Prostate gland (tissue), 2 donors: ENCODE measurements at regions of chr7 and their contacts with region 1.

Region 1: GRCh38 chr7:149028346-149029109 is at the start of gene PDIA4:
- DNase-seq: peak; percentile 99
- H3K4me3 ChIP-seq: peak within 1 kb of the TSS; percentile 91 to 95
- H3K27ac ChIP-seq: peak within 1 kb of the TSS; percentile 79 to 86
- H3K4me1 ChIP-seq: peaks cover 2% of the 10 kb centered on the region
- H3K27me3 ChIP-seq: no peaks in the 10 kb centered on the region
- CTCF ChIP-seq: peak in 2 of 4 experiments; percentile 45 to 51
- POLR2A ChIP-seq: peak; percentile 85
- total RNA-seq, gene PDIA4: 125 to 262 TPM

Region 2: DNA sequence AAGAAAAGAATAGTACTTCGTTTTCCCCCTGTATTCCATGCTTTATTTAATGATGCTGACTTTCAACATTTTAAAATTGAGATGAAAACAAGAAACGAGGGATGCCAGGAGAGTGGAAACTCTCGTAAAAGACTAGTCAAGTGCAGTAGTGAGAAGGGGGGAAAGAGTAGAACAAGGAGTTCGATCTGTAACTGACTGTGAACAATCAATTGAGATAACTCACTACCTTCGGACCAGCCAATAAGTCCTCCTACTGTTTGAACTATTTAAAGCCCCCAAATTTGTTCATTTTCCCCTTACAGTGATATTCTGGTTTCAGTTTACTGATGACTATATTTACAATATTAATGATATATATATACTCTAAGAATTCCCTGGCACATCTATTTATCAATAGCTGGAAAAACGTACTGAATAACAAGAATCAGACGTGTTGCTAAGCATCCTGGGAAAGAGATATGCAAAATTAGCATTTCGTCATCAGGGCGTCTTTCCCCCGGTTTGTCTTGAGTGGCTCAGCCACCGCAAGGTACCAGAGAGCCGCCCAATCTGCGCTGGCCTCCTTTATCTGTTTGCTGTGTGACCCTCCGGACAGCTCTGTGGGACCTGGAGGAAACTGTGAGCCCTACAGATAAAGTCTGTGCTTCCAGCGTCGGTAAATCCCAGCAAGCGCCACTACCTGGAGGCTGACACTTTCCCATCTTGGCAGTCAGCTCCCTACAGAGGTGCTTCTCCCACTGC is 41.3 kb before region 1 on chr7:
- intact Hi-C with region 1: loop called (anchors 2 kb)
- DNase-seq: peak; percentile 89
- H3K4me3 ChIP-seq: peak overlapping the region; percentile 44
- H3K27ac ChIP-seq: peak overlapping the region; percentile 77 to 86
- H3K4me1 ChIP-seq: peaks cover 7% of the 10 kb centered on the region
- H3K27me3 ChIP-seq: no peaks in the 10 kb centered on the region
- CTCF ChIP-seq: peak in 1 of 4 experiments; percentile 18
- POLR2A ChIP-seq: peak; percentile 48

Region 3: DNA sequence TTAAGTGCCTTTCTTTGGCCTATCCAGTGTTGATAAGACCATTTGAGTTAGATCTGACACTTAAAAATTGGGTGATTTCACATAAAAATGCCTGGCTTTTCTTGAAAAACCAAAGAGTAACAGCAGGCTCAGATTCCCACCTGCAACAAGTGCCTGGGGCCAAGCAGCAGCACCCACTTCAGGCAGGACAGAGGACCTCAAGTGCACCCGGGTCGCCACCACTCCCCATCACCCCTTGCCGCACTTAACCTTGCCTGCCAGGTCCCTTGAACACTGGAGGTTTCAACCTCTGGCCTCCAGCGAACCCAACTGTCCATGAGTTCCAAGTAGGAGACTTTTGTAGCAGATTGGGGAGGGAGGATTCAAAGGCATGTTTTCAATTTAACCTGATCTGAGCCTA is 31.0 kb before region 1 on chr7:
- intact Hi-C with region 1: no loop called
- DNase-seq: no peak
- H3K4me3 ChIP-seq: no peak overlapping the region
- H3K27ac ChIP-seq: no peak overlapping the region
- H3K4me1 ChIP-seq: no peaks in the 10 kb centered on the region
- H3K27me3 ChIP-seq: no peaks in the 10 kb centered on the region
- CTCF ChIP-seq: no peak
- POLR2A ChIP-seq: no peak

Region 4: GRCh38 chr7:149067876-149068275 is 39.3 kb after region 1 on chr7:
- intact Hi-C with region 1: loop called (anchors 5 kb)
- DNase-seq: no peak
- H3K4me3 ChIP-seq: no peak overlapping the region
- H3K27ac ChIP-seq: no peak overlapping the region
- H3K4me1 ChIP-seq: no peaks in the 10 kb centered on the region
- H3K27me3 ChIP-seq: no peaks in the 10 kb centered on the region
- CTCF ChIP-seq: no peak
- POLR2A ChIP-seq: no peak

Region 5: DNA sequence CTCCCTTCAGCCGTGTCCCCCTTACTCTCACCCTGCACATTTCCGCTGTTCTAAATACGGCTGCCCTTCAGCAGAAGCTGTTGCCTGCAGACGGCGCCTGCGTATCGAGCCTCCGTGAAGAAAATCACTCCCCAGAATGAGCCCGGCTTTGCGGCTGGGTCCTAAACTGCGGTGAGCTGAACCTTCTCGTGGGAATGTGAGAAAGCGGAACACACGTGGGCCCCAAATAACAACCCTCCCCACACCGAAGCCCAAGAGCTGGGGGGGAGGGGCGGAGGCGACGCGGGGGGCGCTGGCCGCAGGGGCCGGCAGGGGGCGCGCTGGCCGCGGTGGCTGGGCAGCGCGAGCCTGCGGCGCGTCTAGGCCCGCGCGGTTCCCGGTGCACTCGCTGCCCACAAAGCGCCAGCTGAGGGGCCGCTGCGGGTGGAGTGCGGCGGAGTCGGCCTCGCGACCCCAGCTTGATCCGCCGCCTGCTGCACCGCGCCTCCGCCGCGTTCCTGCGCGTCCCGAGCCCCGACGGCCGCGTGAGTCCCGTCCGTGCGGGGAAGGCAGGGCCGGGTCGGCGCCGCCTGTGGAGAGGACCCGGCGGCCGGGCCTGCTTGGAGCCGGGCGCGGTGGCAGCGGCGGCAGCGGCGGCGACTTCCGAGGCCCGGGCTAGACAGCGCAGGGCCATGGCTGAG is 118.7 kb after region 1 on chr7 and contains the start of gene ZNF398:
- intact Hi-C with region 1: no loop called
- DNase-seq: peak; percentile 59
- H3K4me3 ChIP-seq: peak within 1 kb of the TSS; percentile 93 to 98
- H3K27ac ChIP-seq: peak within 1 kb of the TSS; percentile 85 to 93
- H3K4me1 ChIP-seq: no peaks in the 10 kb centered on the region
- H3K27me3 ChIP-seq: no peaks in the 10 kb centered on the region
- CTCF ChIP-seq: peak; percentile 67 to 96 (median 76)
- POLR2A ChIP-seq: peak; percentile 34
- total RNA-seq, gene ZNF398: 27.6 to 28.9 TPM

Region 6: GRCh38 chr7:149811221-149811620 is 782.7 kb after region 1 on chr7:
- intact Hi-C with region 1: no loop called
- DNase-seq: no peak
- H3K4me3 ChIP-seq: no peak overlapping the region
- H3K27ac ChIP-seq: no peak overlapping the region
- H3K4me1 ChIP-seq: no peaks in the 10 kb centered on the region
- H3K27me3 ChIP-seq: no peaks in the 10 kb centered on the region
- CTCF ChIP-seq: no peak
- POLR2A ChIP-seq: no peak